AG04450 (cell line): ENCODE measurements at regions of chr2 and their contacts with region 1.

Region 1: GRCh38 chr2:74602586-74603281 is 45.4 kb downstream of the M1AP start:
- DNase-seq: no peak
- H3K4me3 ChIP-seq: no peak overlapping the region
- H3K27ac ChIP-seq: no peak overlapping the region
- H3K27me3 ChIP-seq: peaks cover 19% of the 10 kb centered on the region
- CTCF ChIP-seq: no peak

Region 2: GRCh38 chr2:74278176-74278575 is 324.6 kb before region 1 on chr2:
- CTCF ChIA-PET with region 1: no interaction called
- POLR2A ChIA-PET with region 1: interaction called, 11 read pairs
- DNase-seq: no peak
- H3K4me3 ChIP-seq: no peak overlapping the region
- H3K27ac ChIP-seq: no peak overlapping the region
- H3K27me3 ChIP-seq: peaks cover 39% of the 10 kb centered on the region
- CTCF ChIP-seq: no peak